ENCODE measurements at regions of chrX and their contacts with region 1.

Region 1: GRCh38 chrX:134886201-134886600 is 104.6 kb upstream of the SMIM10 start:
- DNase-seq: peak; percentile 77
- ATAC-seq: peak; percentile 84
- H3K4me3 ChIP-seq: peak overlapping the region in 1 of 2 experiments; percentile 10; a peak in 1 of 4 replicates
- H3K27ac ChIP-seq: peak overlapping the region; percentile 93
- H3K4me1 ChIP-seq: peaks cover 54% of the 10 kb centered on the region
- H3K27me3 ChIP-seq: no peaks in the 10 kb centered on the region
- CTCF ChIP-seq: no peak

Region 2: DNA sequence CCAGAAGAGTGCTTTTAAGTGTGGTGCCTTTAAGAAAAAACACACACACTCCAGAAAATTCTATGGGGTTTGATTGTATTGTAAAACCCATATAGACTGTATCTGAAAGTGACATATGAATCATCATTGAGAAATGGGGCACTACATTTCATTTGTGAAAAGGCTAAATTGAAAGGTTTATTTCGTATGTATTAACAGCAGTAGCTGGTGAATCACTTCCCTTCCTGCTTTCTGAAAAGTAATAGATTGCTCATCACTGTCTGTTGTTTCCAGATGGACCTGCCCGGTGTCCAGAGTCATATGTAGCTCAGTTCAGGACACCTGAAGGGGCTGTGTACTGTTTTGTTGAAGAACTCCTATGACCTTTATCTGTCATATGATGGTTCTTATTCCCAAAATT is 454.3 kb before region 1 on chrX:
- CTCF ChIA-PET with region 1: no interaction called
- POLR2A ChIA-PET with region 1: interaction called, 13 read pairs
- in situ Hi-C with region 1: no loop called
- intact Hi-C with region 1: no loop called
- DNase-seq: no peak
- ATAC-seq: peak; percentile 48; the same call in 1 of the 2 replicates
- H3K4me3 ChIP-seq: no peak overlapping the region
- H3K27ac ChIP-seq: no peak overlapping the region
- H3K4me1 ChIP-seq: no peaks in the 10 kb centered on the region
- H3K27me3 ChIP-seq: no peaks in the 10 kb centered on the region
- CTCF ChIP-seq: no peak